MCF 10A (cell line): ENCODE measurements at regions of chr2 and their contacts with region 1.

Region 1: DNA sequence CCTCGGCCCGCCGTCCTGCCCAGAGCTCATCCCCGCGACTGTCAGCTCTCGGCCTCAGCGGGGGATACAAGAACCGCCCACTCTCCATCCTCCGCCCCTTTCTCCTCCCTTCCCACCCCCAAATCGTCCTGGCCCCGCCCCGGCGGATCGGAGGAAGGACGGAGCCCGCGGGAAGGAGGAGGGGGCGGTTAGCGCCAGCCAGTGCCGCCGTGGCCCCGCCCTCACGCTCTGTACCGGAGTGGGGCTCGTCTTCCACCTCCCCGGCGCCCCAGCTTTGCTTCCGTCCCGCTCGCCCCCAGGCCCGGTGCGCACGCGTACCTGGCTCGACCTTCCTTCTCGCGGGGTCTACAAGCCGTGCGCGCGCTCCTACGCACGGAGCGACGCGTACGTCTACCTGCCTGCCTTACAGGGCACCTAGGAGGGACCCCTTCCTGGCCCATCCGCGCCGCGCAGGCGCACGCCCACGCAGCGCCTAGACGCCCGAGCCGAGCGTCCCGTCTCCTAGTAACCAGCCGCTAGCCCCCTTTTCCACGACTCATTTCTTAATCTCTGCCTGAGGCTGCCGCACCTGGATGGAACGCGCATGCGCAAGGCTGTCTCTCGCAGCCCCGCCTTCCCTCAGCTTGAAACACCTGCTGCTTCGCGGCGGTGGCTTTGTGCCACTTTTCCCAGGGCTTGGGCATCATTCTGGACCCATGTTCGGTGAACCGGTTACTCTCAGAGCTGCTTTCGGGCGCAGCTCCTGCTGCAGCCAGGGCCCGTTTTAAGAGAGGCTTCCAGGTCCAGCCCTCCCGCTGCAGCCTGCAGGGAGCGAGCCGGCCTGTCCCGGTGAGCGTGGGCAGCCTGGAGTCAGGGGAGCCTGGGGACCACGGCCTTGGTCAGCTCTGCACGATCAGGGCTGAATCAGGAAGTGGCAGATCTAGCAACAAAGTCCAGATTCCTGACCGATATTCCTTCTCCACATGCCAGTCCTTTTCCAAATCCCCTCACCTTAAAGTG is at the start of gene C2orf15:
- DNase-seq: peak; percentile 95
- H3K4me3 Mint-ChIP-seq: peak within 1 kb of the TSS; percentile 99
- H3K27ac Mint-ChIP-seq: peak within 1 kb of the TSS; percentile 92
- H3K4me1 Mint-ChIP-seq: peaks cover 8% of the 10 kb centered on the region
- H3K27me3 Mint-ChIP-seq: no peaks in the 10 kb centered on the region
- CTCF ChIP-seq: no peak
- total RNA-seq, gene C2orf15: 0.74 and 0.93 TPM in 2 replicates

Region 2: GRCh38 chr2:99169534-99169933 is 28.1 kb after region 1 on chr2:
- CTCF ChIA-PET with region 1: interaction called, 5 read pairs
- POLR2A ChIA-PET with region 1: interaction called, 11 read pairs
- intact Hi-C with region 1: no loop called
- DNase-seq: no peak
- H3K4me3 Mint-ChIP-seq: no peak overlapping the region
- H3K27ac Mint-ChIP-seq: no peak overlapping the region
- H3K4me1 Mint-ChIP-seq: no peaks in the 10 kb centered on the region
- H3K27me3 Mint-ChIP-seq: no peaks in the 10 kb centered on the region
- CTCF ChIP-seq: no peak

Region 3: DNA sequence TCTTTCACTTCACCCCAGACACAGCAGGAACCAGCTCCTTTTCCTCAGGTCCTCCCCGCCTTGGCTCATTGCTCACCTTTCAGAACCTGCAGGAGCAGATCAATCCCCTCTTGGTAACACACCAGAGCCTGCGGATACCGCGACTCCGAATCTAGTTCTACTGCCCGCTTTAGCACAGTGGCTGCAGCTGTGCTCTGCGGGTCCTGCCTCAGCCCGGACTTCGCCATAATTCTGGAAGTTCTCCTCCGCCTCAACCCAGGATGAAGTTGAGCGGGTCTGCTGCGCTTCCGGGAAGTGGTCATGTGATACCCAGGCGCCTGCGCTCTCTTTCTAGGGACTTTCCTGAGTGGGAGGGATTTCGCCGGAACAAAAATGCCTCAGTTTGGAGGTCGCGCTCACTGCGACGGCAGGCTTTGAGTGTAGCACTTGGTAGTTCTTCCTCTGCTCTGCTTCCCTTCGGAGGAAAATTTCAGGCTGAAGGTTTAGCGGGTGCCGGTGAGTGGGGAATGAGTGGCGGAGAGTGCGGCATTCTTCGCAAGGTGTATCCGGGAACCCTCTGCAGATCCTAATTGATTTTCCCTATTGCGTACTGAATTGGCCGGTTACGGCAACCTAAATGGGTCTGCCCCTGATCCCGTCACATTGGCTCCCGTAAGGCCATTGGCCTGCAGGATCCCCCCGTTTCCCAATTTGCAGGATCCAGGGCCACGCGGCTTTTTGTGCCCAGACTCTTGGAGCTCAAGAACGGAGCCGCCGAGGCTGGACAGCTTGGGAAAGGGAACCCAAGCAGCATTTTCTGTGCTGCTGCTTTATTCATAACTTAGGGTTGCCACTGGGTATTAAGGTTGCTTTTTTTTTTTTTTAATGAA is 39.6 kb after region 1 on chr2 and contains the starts of genes MITD1 and MRPL30:
- CTCF ChIA-PET with region 1: no interaction called
- POLR2A ChIA-PET with region 1: interaction called, 50 read pairs
- intact Hi-C with region 1: no loop called
- DNase-seq: peak; percentile 96
- H3K4me3 Mint-ChIP-seq: peak within 1 kb of the TSS; percentile 87
- H3K27ac Mint-ChIP-seq: peak within 1 kb of the TSS; percentile 86
- H3K4me1 Mint-ChIP-seq: peaks cover 30% of the 10 kb centered on the region
- H3K27me3 Mint-ChIP-seq: no peaks in the 10 kb centered on the region
- CTCF ChIP-seq: no peak
- total RNA-seq, gene MITD1: 19.1 and 21.2 TPM in 2 replicates
- total RNA-seq, gene MRPL30: 39.1 and 42.5 TPM in 2 replicates

Region 4: GRCh38 chr2:99926986-99927385 is 785.6 kb after region 1 on chr2:
- CTCF ChIA-PET with region 1: no interaction called
- POLR2A ChIA-PET with region 1: no interaction called
- intact Hi-C with region 1: no loop called
- DNase-seq: no peak
- H3K4me3 Mint-ChIP-seq: no peak overlapping the region
- H3K27ac Mint-ChIP-seq: no peak overlapping the region
- H3K4me1 Mint-ChIP-seq: no peaks in the 10 kb centered on the region
- H3K27me3 Mint-ChIP-seq: no peaks in the 10 kb centered on the region
- CTCF ChIP-seq: no peak

Region 5: GRCh38 chr2:100309973-100310719 is 1168.7 kb after region 1 on chr2:
- CTCF ChIA-PET with region 1: no interaction called
- POLR2A ChIA-PET with region 1: no interaction called
- intact Hi-C with region 1: no loop called
- DNase-seq: no peak
- H3K4me3 Mint-ChIP-seq: no peak overlapping the region
- H3K27ac Mint-ChIP-seq: no peak overlapping the region
- H3K4me1 Mint-ChIP-seq: no peaks in the 10 kb centered on the region
- H3K27me3 Mint-ChIP-seq: no peaks in the 10 kb centered on the region
- CTCF ChIP-seq: no peak